B cell (primary cell): ENCODE measurements at regions of chr14 and their contacts with region 1.

Region 1: DNA sequence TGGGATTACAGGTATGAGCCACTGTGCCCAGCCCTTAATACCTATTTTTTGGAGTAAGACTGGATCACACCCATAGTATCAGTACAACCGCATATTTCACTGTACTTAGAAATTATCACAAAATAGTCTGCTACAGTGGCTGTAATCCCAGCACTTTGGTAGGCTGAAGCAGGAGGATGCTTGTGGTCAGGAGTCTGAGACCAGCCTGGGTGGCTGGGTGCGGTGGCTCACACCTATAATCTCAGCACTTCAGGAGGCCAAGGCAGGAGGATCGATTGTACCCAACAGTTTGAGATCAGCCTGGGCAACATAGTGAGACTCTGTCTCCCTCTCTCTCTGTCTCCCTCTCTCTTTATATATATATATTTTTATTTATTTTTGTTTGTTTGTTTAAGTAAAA is 5.9 kb downstream of the SPTLC2 start:
- DNase-seq: no peak
- ATAC-seq: no peak
- H3K4me3 ChIP-seq: no peak overlapping the region
- H3K4me3 Mint-ChIP-seq: no peak overlapping the region
- H3K27ac ChIP-seq: no peak overlapping the region
- H3K27ac Mint-ChIP-seq: no peak overlapping the region
- H3K4me1 ChIP-seq: peaks cover 51 to 55% of the 10 kb centered on the region in 2 donors
- H3K4me1 Mint-ChIP-seq: peaks cover 64% of the 10 kb centered on the region
- H3K27me3 ChIP-seq: no peaks in the 10 kb centered on the region
- H3K27me3 Mint-ChIP-seq: no peaks in the 10 kb centered on the region
- CTCF ChIP-seq: no peak

Region 2: DNA sequence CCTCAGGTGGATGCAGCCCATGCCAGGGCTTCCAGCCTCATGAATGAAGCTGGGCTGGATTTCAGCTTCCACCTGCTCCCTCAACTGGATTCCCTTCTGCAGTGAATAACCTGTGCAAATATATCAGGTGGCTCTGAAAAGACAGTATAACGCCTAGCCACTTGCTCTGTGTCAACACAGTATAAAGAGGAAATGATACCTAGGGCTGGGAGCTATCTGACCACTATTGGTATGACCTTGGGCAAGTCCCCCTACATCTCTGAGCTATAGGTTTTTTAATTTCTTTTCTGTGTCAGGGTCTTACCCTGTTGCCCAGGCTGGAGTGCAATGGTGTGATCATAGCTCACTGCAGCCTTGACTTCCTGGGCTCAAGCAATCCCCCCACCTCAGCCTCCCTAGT is 131.8 kb before region 1 on chr14:
- CTCF ChIA-PET with region 1: no interaction called
- POLR2A ChIA-PET with region 1: no interaction called
- intact Hi-C with region 1: no loop called
- DNase-seq: no peak
- ATAC-seq: no peak
- H3K4me3 ChIP-seq: no peak overlapping the region
- H3K4me3 Mint-ChIP-seq: no peak overlapping the region
- H3K27ac ChIP-seq: no peak overlapping the region
- H3K27ac Mint-ChIP-seq: no peak overlapping the region
- H3K4me1 ChIP-seq: peaks cover 3 to 6% of the 10 kb centered on the region in 2 donors
- H3K4me1 Mint-ChIP-seq: no peaks in the 10 kb centered on the region
- H3K27me3 ChIP-seq: no peaks in the 10 kb centered on the region
- H3K27me3 Mint-ChIP-seq: no peaks in the 10 kb centered on the region
- CTCF ChIP-seq: no peak

Region 3: DNA sequence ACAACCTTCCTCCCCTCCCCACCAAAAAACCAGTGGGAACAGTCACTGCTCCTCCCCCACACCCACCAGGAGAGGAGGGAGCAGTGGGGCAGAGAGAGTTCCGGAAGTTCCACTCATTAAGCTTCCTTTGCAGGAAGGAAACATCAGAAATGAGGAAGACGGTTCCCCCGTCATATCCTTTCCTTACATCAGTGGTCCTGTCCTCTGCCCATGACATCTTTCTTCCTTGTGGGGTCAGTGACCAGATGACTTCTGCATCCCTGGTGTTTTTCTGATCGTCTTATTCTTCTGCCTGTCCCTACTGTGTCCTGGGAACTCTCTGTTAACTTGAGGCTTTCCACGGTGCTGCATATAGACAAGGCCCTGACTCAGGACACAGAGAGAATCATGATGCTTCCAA is 46.7 kb after region 1 on chr14:
- CTCF ChIA-PET with region 1: no interaction called
- POLR2A ChIA-PET with region 1: interaction called, 11 read pairs
- intact Hi-C with region 1: no loop called
- DNase-seq: no peak
- ATAC-seq: no peak
- H3K4me3 ChIP-seq: no peak overlapping the region
- H3K4me3 Mint-ChIP-seq: no peak overlapping the region
- H3K27ac ChIP-seq: no peak overlapping the region
- H3K27ac Mint-ChIP-seq: no peak overlapping the region
- H3K4me1 ChIP-seq: peaks cover 0 to 6% of the 10 kb centered on the region in 2 donors
- H3K4me1 Mint-ChIP-seq: peaks cover 4% of the 10 kb centered on the region
- H3K27me3 ChIP-seq: no peaks in the 10 kb centered on the region
- H3K27me3 Mint-ChIP-seq: no peaks in the 10 kb centered on the region
- CTCF ChIP-seq: no peak